ENCODE measurements at regions of chr6 and their contacts with region 1.

Region 1: GRCh38 chr6:46983007-46983411 is 59.1 kb downstream of the ADGRF1 start:
- DNase-seq: no peak
- ATAC-seq: no peak
- H3K4me3 ChIP-seq: no peak overlapping the region
- H3K27ac ChIP-seq: no peak overlapping the region
- H3K4me1 ChIP-seq: no peaks in the 10 kb centered on the region
- H3K27me3 ChIP-seq: peaks cover 0 to 15% of the 10 kb centered on the region in 2 experiments; a peak in 1 of 5 replicates
- CTCF ChIP-seq: no peak
- EP300 ChIP-seq: no peak
- POLR2A ChIP-seq: no peak
- RAD21 ChIP-seq: no peak

Region 2: GRCh38 chr6:46062306-46062706 is 920.7 kb before region 1 on chr6:
- CTCF ChIA-PET with region 1: no interaction called
- POLR2A ChIA-PET with region 1: no interaction called
- in situ Hi-C with region 1: loop called (anchors 25 kb)
- intact Hi-C with region 1: no loop called
- DNase-seq: no peak
- ATAC-seq: no peak
- H3K4me3 ChIP-seq: no peak overlapping the region
- H3K27ac ChIP-seq: no peak overlapping the region
- H3K4me1 ChIP-seq: no peaks in the 10 kb centered on the region
- H3K27me3 ChIP-seq: no peaks in the 10 kb centered on the region
- CTCF ChIP-seq: no peak
- EP300 ChIP-seq: no peak
- POLR2A ChIP-seq: no peak
- RAD21 ChIP-seq: no peak

Region 3: GRCh38 chr6:46734867-46735719 is 247.9 kb before region 1 on chr6 and contains the start of gene PLA2G7:
- CTCF ChIA-PET with region 1: no interaction called
- POLR2A ChIA-PET with region 1: no interaction called
- in situ Hi-C with region 1: no loop called
- intact Hi-C with region 1: no loop called
- DNase-seq: no peak
- ATAC-seq: peak; percentile 42; the same call in 2 of the 3 replicates
- H3K4me3 ChIP-seq: no peak within 1 kb of the TSS
- H3K27ac ChIP-seq: no peak within 1 kb of the TSS
- H3K4me1 ChIP-seq: peaks cover 0 to 7% of the 10 kb centered on the region in 2 experiments; a peak in 1 of 5 replicates
- H3K27me3 ChIP-seq: peaks cover 6 to 16% of the 10 kb centered on the region in 2 experiments; a peak in 4 of 5 replicates
- CTCF ChIP-seq: no peak
- EP300 ChIP-seq: no peak
- POLR2A ChIP-seq: no peak
- RAD21 ChIP-seq: no peak
- polyA plus RNA-seq, gene PLA2G7: not detected

Region 4: DNA sequence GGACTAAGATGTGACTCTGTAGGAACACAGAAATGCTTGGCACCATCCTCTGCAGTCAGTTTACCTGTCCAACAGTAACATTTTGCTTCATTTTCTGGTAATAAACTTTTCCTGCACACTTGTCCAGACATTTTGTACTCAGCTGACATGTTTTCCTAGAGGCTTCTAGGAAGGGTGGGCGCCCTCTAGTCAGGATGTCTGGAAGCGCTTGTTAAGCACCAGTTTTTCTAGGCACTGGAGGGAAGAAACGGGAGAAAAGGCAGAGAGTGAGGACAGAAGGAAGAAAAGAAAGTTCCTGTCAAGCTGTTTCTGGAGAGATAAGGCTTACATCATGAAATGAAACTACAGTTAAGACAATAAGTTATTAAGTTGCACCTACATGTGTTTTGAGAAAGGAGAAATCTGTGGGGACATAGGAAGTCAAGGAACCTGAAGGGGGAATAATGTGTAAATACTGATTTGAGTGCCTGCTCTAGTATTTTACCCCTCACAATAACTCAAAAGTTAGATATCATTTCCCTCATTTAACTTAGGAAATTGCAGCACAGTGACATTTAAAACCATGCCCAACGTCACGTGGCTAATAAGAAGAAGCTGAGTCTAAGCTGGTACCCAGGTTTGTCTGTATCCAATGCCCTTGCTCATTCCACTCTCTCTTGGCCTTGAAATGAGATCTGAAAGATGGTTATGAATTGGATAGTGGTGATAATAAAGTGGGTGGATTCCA is 369.3 kb after region 1 on chr6:
- CTCF ChIA-PET with region 1: no interaction called
- POLR2A ChIA-PET with region 1: no interaction called
- in situ Hi-C with region 1: no loop called
- intact Hi-C with region 1: no loop called
- DNase-seq: peak in 3 of 4 experiments; percentile 17 to 41 (median 24)
- ATAC-seq: peak; percentile 83
- H3K4me3 ChIP-seq: no peak overlapping the region
- H3K27ac ChIP-seq: no peak overlapping the region
- H3K4me1 ChIP-seq: no peaks in the 10 kb centered on the region
- H3K27me3 ChIP-seq: no peaks in the 10 kb centered on the region
- CTCF ChIP-seq: peak; percentile 45 to 71 (median 60); a peak in 5 of 6 replicates
- EP300 ChIP-seq: no peak
- POLR2A ChIP-seq: no peak
- RAD21 ChIP-seq: peak in 1 of 2 experiments; percentile 32; a peak in 1 of 4 replicates

Measured in K562 (cell line).